ENCODE measurements at regions of chr2 and their contacts with region 1.

Region 1: DNA sequence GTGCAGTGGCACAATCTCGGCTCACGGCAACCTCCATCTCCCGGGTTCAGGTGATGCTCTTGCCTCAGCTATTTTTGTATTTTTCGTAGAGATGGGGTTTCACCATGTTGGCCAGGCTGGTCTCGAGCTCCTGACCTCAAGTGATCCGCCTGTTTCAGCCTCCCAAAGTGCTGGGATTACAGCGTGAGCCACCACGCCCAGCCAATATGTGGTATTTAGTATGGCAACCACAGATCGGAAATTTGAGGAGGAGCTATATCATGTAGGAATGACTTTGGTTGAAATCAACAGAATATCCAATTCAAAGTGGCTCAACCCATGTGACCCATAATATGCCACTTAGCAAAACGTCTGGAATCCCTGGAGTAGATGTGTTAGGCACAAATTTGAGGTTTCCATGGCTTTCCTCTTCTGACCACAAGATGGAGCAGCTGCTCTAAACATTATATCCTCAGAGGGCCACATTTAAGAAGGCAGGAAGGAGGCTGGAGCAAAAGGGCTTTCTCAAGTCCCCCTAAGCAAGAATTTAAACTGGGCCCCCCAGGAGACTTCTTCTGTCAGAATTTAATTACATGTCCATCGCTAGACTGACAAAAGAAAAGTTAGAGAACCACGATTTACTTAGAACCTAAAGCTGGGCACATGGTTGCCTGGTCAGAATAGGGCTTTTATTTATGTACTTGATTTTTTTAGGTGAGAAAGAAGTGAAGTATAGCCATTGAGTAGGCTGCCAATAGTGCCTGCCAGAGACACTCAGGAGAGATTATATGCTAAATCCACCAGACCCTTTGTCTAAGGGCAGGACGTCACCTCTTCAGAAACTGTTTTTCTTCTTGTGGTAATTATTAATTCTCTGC is 49.6 kb upstream of the ITSN2 start:
- DNase-seq: peak; percentile 68
- ATAC-seq: peak; percentile 95
- H3K4me3 ChIP-seq: no peak overlapping the region
- H3K27ac ChIP-seq: no peak overlapping the region
- H3K4me1 ChIP-seq: no peaks in the 10 kb centered on the region
- H3K27me3 ChIP-seq: no peaks in the 10 kb centered on the region
- CTCF ChIP-seq: peak; percentile 88

Region 2: DNA sequence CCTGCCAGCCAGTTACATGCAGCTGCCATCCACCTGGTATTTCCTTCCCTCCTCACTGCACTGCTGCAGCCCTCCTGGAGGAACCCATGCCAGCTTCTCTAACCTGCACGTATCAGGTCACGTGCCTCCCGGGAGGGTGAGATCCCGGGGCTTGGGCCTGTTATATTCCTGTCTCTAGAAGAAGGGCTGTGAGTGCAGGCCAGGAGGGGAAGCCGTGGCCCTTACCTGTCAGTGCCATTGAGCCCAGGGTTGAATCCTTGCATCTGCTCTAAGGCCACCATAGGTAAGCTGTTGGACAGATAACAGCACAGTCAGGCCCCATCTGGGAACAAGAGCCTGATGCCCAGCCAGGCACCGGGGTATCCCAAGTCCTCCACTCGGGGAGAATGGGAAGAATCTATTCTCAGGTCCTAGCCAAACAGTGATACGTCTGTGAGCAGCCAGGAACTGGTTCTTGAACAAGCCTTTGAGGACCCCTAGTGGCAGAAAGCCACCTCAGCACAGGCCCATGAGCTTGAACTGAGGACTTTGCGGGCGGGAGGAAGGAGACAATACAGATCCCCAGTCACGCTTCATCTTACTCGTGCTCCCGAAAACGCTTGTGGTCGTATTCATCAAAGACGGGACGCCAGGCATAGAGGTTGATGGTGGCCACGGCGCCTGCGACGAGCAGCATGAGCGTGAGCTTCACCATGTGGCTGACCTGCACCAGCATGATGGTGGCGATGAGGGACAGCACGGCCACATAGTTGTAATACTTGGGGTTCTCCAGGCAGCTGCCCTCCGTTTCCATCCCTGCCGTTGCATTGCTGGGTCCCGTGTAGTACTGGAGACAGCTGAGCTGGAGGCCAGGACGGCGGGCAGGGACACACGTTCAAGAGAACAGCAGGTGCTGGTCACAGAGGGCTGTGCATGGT is 417.7 kb after region 1 on chr2:
- CTCF ChIA-PET with region 1: interaction called, 13 read pairs
- POLR2A ChIA-PET with region 1: no interaction called
- in situ Hi-C with region 1: no loop called
- intact Hi-C with region 1: loop called (anchors 1 kb)
- DNase-seq: peak; percentile 71
- ATAC-seq: peak; percentile 94
- H3K4me3 ChIP-seq: no peak overlapping the region
- H3K27ac ChIP-seq: no peak overlapping the region
- H3K4me1 ChIP-seq: peaks cover 11% of the 10 kb centered on the region
- H3K27me3 ChIP-seq: no peaks in the 10 kb centered on the region
- CTCF ChIP-seq: peak; percentile 93

Measured in Panc1 (cell line).